Esophagus muscularis mucosa (tissue), 4 donors: ENCODE measurements at regions of chr2 and their contacts with region 1.

Region 1: DNA sequence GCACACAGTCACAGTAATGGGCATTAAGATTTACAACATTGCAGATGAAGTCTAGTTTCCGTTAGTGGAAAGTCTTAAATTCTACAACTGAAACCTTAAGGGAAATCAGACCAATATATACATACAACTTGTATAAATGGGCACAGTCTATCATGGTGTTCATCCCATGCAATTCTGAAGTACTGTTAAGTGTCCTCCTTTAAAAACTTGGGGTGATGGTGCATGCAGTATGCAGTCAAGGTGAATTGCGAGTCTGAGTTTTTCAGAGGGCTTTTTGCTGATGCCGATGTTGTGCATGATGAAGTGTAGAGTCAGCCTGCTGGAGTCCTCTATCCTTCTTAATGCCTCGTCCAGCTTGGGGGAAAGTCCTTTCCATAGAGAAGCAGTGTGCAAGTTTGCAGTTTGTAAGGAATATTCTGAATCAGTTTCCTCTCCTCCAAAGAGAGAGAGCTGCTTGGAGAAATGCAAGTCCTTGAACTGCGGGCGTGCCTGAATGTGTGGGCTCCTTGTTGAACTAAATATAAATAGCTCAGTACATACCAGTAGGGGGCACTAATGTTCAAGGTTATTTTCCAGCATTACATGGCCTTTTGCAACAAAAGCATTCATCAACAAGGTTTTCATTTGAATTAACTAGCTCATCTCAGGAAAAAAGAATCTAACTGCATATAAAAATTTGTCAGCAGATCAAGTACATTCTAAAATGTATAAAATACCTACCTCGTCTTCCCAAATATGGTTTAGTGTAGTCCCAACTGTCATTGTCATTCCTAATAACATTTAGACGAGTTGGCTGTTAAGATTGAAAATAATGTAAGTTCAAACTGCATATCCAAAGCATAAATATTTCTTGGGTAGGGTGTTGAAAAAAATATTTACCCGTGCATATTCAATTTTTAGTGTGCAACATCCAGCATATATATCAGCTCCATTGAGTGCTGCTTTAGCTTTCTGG is 21.3 kb downstream of the HNRNPLL start:
- DNase-seq: no peak
- H3K4me3 ChIP-seq: no peak overlapping the region
- H3K27ac ChIP-seq: no peak overlapping the region
- H3K4me1 ChIP-seq: peaks cover 12 to 52% (median 41%) of the 10 kb centered on the region in 4 donors
- H3K27me3 ChIP-seq: no peaks in the 10 kb centered on the region
- CTCF ChIP-seq: peak; percentile 67 to 76 (median 67)
- EP300 ChIP-seq: no peak
- POLR2A ChIP-seq: no peak

Region 2: DNA sequence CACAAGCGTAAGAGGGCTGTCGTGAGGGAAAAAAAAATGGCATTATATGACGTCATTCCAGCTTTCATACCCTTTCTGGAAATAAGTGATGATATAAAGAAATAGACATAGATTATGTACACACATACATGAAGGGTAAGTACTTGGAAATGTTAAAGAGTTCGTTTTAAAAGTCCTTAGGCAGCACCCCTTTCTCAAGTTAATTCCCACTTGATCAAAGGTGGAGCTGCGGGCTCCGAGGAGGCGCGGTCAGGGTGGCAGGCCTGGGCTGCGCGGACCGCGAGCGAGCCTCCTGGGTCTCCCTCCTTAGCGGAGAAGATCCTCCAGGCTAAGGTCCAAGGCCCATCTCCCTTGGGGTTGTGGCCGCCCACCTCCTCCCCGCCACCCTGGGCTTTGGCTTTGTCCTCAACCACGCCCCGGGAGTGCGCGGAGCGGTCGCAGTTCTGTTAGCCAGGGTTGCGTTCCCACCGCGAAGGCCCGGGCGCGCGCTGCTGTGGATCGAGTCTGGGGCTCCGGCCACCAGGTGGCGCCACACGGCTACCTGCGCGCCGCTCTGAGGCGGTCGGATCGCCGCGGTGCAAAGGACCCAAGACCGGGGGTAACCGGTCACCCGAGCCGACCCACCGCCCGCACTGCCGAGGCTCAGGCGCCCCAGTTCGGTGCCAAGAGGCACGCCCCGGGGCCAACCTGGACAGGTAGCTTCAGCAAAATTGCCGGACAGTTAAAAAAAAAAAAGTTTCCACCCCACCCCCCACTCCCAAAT is 45.5 kb before region 1 on chr2:
- intact Hi-C with region 1: loop called (anchors 5 kb)
- DNase-seq: peak; percentile 94
- H3K4me3 ChIP-seq: peak overlapping the region; percentile 55 to 64 (median 58)
- H3K27ac ChIP-seq: peak overlapping the region; percentile 74 to 82 (median 79)
- H3K4me1 ChIP-seq: peaks cover 4 to 44% (median 41%) of the 10 kb centered on the region in 4 donors
- H3K27me3 ChIP-seq: no peaks in the 10 kb centered on the region
- CTCF ChIP-seq: peak; percentile 88 to 95 (median 95)
- EP300 ChIP-seq: no peak
- POLR2A ChIP-seq: no peak

Region 3: GRCh38 chr2:38690499-38691294 is 109.2 kb after region 1 on chr2:
- intact Hi-C with region 1: no loop called
- DNase-seq: no peak
- H3K4me3 ChIP-seq: no peak overlapping the region
- H3K27ac ChIP-seq: no peak overlapping the region
- H3K4me1 ChIP-seq: peaks cover 0 to 7% (median under 1%) of the 10 kb centered on the region in 4 donors
- H3K27me3 ChIP-seq: no peaks in the 10 kb centered on the region
- CTCF ChIP-seq: no peak
- EP300 ChIP-seq: no peak
- POLR2A ChIP-seq: no peak

Region 4: DNA sequence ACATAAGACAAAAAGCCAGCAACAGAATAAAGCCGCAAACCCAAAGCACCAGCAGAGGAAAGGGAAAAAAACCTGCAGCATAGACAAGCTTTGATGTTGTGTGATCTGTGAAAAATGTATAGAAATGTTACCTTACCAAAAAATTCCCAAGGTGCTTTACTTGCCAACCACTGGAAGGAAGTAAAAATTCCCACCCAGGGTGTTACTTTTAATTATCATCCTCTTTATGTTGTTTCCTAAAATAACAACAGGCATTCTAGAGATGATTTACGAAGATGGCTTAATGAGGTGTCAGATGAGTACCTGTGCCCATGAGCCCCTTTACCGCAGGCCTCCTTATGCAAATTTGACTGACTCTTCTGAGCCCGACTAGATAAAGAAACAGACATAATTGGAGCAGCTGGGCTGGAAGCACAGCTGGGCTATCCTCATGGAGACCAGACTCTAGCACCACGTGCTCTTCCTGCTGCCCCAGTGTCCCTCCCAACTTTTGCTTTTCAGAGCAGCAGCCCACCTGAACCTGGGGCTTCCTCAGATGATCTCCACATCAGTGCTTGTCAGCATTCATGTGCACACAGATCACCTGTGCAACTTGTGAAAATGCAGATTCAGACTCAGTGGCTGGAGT is 128.2 kb after region 1 on chr2:
- intact Hi-C with region 1: no loop called
- DNase-seq: no peak
- H3K4me3 ChIP-seq: no peak overlapping the region
- H3K27ac ChIP-seq: no peak overlapping the region
- H3K4me1 ChIP-seq: no peaks in the 10 kb centered on the region
- H3K27me3 ChIP-seq: no peaks in the 10 kb centered on the region
- CTCF ChIP-seq: no peak
- EP300 ChIP-seq: no peak
- POLR2A ChIP-seq: no peak

Region 5: DNA sequence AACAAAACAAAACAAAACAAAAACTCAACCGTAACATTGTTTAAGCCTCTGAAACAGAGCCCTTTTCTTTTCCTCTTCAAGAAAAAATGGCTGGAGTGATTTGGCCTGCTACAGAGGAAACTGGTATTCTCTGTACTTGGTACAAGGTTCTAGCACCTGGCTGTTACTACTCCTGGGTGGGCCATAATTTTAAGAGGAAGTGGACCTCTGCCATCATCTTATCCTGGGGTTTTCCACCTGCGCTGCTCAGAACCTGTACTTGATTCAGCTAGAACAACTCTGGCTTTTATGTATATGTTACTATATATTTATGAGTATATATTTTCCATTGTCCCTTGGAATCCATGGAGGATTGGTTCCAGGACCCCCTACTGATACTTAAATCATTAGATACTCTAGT is 147.2 kb after region 1 on chr2:
- intact Hi-C with region 1: loop called (anchors 2 kb)
- DNase-seq: no peak
- H3K4me3 ChIP-seq: no peak overlapping the region
- H3K27ac ChIP-seq: no peak overlapping the region
- H3K4me1 ChIP-seq: peaks cover 0 to 4% (median 0%) of the 10 kb centered on the region in 4 donors
- H3K27me3 ChIP-seq: no peaks in the 10 kb centered on the region
- CTCF ChIP-seq: no peak
- EP300 ChIP-seq: no peak
- POLR2A ChIP-seq: no peak

Region 6: GRCh38 chr2:38740851-38741731 is 159.6 kb after region 1 on chr2:
- intact Hi-C with region 1: loop called (anchors 5 kb)
- DNase-seq: no peak
- H3K4me3 ChIP-seq: peak overlapping the region in 1 of 4 donors; percentile 14
- H3K27ac ChIP-seq: peak overlapping the region; percentile 69 to 75 (median 70)
- H3K4me1 ChIP-seq: peaks cover 22 to 68% (median 66%) of the 10 kb centered on the region in 4 donors
- H3K27me3 ChIP-seq: no peaks in the 10 kb centered on the region
- CTCF ChIP-seq: peak; percentile 62 to 72 (median 66)
- EP300 ChIP-seq: no peak
- POLR2A ChIP-seq: no peak